Adrenal gland (tissue), 19 donors: ENCODE measurements at regions of chr9 and their contacts with region 1.

Region 1: GRCh38 chr9:134135343-134136118 is at the start of gene WDR5:
- DNase-seq: peak; percentile 91 to 96 (median 94)
- H3K4me3 ChIP-seq: peak within 1 kb of the TSS; percentile 82 to 94 (median 88)
- H3K27ac ChIP-seq: peak within 1 kb of the TSS; percentile 62 to 88 (median 83)
- H3K4me1 ChIP-seq: peaks cover 26 to 33% of the 10 kb centered on the region in 2 donors
- H3K27me3 ChIP-seq: no peaks in the 10 kb centered on the region
- CTCF ChIP-seq: peak in 1 of 6 experiments; percentile 13
- POLR2A ChIP-seq: peak in 1 of 2 donors; percentile 48
- total RNA-seq, gene WDR5: 16.6 to 28.5 (median 26.2) TPM

Region 2: GRCh38 chr9:133589454-133590227 is 545.9 kb before region 1 on chr9:
- intact Hi-C with region 1: no loop called
- DNase-seq: no peak
- H3K4me3 ChIP-seq: no peak overlapping the region
- H3K27ac ChIP-seq: no peak overlapping the region
- H3K4me1 ChIP-seq: no peaks in the 10 kb centered on the region
- H3K27me3 ChIP-seq: peaks cover 14% of the 10 kb centered on the region
- CTCF ChIP-seq: peak in 5 of 6 experiments; percentile 6 to 36 (median 31)
- POLR2A ChIP-seq: no peak

Region 3: DNA sequence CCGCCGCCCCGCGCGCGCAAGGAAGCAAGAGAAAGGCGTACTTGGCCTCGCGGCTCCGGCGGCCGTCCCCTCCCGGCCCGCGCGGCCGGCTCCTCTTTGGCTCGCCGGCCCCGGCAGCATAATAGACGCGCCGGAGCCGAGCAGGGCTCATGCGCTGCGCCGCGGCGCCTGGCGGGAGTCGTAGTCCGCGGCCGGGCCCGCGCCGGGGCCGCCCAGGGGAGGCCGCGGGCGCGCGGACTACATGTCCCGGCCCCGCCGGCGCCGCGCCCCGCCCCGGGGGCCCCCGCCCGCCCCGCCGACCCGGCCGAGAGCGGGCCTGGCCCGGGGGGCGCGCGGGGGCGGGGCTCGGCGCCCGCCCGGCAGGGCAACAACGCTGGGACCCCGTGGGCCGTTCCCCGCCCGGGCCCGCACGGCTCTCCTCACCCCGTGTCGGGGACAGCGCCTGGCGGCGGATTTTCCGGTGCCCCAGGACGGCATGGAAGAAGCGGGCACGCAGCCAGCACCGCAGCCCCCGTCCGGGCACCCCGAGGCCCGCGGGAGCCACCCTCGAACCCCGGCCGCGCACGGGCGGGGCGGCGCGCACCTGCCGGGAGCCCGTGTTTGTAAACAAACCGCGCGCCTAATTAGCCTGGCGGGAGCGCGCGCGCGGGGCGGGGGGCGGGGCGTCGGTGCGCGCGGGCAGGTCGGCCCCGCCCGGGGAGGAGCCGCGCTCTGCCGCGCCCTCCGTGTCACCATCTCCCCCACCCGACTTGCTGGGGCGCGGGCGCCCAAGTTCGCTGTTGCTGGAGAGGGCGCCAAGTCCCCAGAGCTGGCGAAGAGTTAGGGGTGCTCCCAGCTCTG is 67.4 kb before region 1 on chr9 and contains the start of gene BRD3:
- intact Hi-C with region 1: loop called in 1 of 2 experiments (anchors 5 kb)
- DNase-seq: peak; percentile 79 to 90 (median 83)
- H3K4me3 ChIP-seq: peak within 1 kb of the TSS; percentile 7 to 98 (median 48)
- H3K27ac ChIP-seq: peak within 1 kb of the TSS; percentile 72 to 98 (median 92)
- H3K4me1 ChIP-seq: peaks cover 25 to 35% of the 10 kb centered on the region in 2 donors
- H3K27me3 ChIP-seq: no peaks in the 10 kb centered on the region
- CTCF ChIP-seq: no peak
- POLR2A ChIP-seq: peak; percentile 78 to 90
- total RNA-seq, gene BRD3: 13.7 to 73.1 (median 23.6) TPM